Dorsolateral prefrontal cortex (tissue), 120 donors: ENCODE measurements at regions of chr4 and their contacts with region 1.

Region 1: DNA sequence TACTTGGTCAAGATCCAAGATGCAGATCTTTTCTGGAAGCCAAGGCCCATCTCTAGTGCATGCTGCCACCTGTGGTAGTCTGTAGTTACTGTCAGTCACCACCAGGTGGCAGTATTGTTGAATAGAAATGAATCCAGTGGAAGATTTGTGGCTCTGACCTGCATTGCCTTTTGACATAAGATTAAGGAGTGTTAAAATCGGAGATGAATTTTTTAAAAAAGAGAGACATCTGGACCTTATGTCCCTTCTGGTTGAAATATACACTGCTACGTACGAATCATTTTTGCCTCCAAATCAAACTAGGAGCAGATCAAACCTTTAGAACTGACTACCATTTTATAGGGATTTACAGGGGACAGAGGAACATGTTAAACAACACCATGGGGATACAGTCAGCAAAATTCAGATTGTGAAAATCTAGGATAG is 46.9 kb upstream of the RHOH start:
- DNase-seq: peak in 3 of 10 donors; percentile 9 to 51 (median 36)
- H3K4me3 ChIP-seq: no peak overlapping the region
- H3K27ac ChIP-seq: no peak overlapping the region
- H3K27me3 ChIP-seq: no peaks in the 10 kb centered on the region
- CTCF ChIP-seq: peak; percentile 60 to 91 (median 80)

Region 2: DNA sequence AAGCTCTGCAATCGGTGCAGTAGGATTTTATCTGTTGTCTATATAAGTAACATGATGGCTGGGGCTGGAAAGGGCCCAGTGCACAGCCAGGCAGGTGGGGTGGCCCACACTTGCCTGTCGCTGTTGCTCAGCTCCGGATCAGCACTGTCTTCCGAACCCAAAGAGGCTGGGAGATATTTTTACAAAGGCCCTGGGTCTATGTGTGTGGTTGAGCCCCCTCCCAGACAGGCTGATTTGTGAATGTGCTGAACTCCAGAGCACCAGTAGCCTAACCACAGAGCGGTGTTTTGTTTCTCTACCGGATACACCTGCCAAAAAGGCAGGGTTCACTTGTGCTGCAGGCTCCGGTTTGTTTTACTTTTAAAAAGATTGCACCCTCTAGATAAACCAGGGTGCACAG is 151.6 kb after region 1 on chr4:
- intact Hi-C with region 1: no loop called
- DNase-seq: no peak
- H3K4me3 ChIP-seq: no peak overlapping the region
- H3K27ac ChIP-seq: no peak overlapping the region
- H3K27me3 ChIP-seq: peaks cover 0 to 41% (median 4%) of the 10 kb centered on the region in 45 donors
- CTCF ChIP-seq: no peak

Region 3: GRCh38 chr4:40325189-40326019 is 175.4 kb after region 1 on chr4:
- intact Hi-C with region 1: loop called in 1 of 2 experiments (anchors 10 kb)
- DNase-seq: peak in 4 of 10 donors; percentile 22 to 45 (median 34)
- H3K4me3 ChIP-seq: no peak overlapping the region
- H3K27ac ChIP-seq: peak overlapping the region in 5 of 59 donors; percentile 10 to 42 (median 30)
- H3K27me3 ChIP-seq: peaks cover 0 to 9% (median 0%) of the 10 kb centered on the region in 45 donors
- CTCF ChIP-seq: peak; percentile 37 to 78 (median 66)